CD8-positive, alpha-beta memory T cell (primary cell): ENCODE measurements at regions of chr11 and their contacts with region 1.

Region 1: DNA sequence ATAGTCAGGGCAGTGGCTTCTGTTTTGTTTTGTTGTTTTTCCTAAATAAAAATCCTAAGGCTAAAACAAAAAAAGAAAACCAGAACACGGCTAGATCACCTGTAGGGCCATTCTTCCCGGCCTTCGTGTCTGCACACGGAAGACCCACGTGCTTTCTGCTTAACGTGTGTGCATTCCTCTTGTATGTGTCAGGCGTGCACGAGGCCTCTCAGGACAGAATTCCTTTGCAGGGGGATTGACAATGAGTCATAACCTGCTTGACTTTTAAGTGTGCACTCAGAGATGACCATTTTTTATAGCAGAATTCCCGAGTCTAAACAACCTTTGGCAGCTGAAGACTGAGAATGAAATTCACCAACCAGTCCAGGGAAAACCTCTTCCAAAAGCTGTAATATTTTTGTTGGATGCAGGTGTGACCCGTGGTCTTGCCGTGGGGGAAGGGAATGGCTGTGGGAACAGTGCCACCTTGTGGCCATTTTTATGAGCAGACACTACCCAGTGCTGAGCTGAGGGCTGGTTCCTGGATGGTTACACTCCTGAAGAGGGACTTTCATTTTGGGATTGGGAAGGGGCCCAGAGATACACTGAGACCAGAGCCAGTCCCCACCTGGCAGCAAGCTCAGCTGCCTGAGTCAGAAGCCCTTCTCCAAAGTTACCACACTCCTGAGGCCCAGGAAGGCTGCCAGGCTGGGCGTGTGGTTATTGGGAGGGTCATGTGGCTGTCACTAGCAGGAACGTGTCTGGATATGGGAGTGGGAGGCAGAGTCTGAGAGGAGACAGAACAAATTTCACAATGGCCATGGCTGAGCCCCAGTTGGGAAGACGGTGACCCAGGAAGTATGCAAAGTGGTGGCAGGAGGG is 35.8 kb upstream of the DKK3 start:
- DNase-seq: peak; percentile 43 to 74 (median 51)
- H3K4me3 ChIP-seq: no peak overlapping the region
- H3K4me3 Mint-ChIP-seq: no peak overlapping the region
- H3K27ac ChIP-seq: no peak overlapping the region
- H3K27ac Mint-ChIP-seq: no peak overlapping the region
- H3K4me1 ChIP-seq: peaks cover 4% of the 10 kb centered on the region
- H3K4me1 Mint-ChIP-seq: peaks cover 3 to 5% (median 4%) of the 10 kb centered on the region in 3 donors
- H3K27me3 ChIP-seq: no peaks in the 10 kb centered on the region
- H3K27me3 Mint-ChIP-seq: peaks cover 0 to 10% of the 10 kb centered on the region in 2 donors

Region 2: GRCh38 chr11:11391796-11392195 is 652.4 kb before region 1 on chr11:
- CTCF ChIA-PET with region 1: no interaction called
- POLR2A ChIA-PET with region 1: no interaction called
- DNase-seq: no peak
- H3K4me3 ChIP-seq: no peak overlapping the region
- H3K4me3 Mint-ChIP-seq: no peak overlapping the region
- H3K27ac ChIP-seq: no peak overlapping the region
- H3K27ac Mint-ChIP-seq: no peak overlapping the region
- H3K4me1 ChIP-seq: no peaks in the 10 kb centered on the region
- H3K4me1 Mint-ChIP-seq: no peaks in the 10 kb centered on the region
- H3K27me3 ChIP-seq: no peaks in the 10 kb centered on the region
- H3K27me3 Mint-ChIP-seq: peaks cover 4 to 30% of the 10 kb centered on the region in 2 donors

Region 3: DNA sequence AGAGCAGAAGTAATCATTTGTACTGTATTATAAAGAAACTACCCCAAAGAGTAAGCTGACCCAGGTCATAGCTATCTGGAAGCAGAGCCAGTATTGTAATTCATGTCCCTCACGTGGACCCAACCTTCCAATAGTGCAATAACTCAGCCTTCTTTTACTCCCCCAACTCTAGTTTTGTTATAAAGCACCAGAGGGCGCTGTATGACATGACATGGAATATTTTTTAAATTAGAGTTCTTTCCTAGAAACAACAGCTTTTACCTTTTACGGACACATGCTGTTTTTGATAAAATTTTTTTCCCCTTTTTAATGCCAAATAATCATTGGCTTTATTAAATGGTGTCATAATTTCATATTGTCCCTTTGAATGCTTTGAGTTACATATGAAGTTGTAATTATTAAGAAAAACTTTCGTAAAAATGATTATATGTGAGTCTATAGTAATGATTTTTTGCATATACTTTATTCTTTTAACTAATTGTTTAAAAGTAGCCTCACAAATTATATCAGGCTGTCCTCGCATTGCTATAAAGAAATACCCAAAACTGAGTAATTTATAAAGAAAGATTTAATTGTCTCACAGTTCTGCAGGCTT is 112.6 kb before region 1 on chr11:
- CTCF ChIA-PET with region 1: interaction called, 21 read pairs
- POLR2A ChIA-PET with region 1: no interaction called
- DNase-seq: peak in 2 of 5 donors; percentile 11 to 22
- H3K4me3 ChIP-seq: no peak overlapping the region
- H3K4me3 Mint-ChIP-seq: no peak overlapping the region
- H3K27ac ChIP-seq: no peak overlapping the region
- H3K27ac Mint-ChIP-seq: peak overlapping the region in 1 of 8 donors; percentile 68
- H3K4me1 ChIP-seq: no peaks in the 10 kb centered on the region
- H3K4me1 Mint-ChIP-seq: peaks cover 1 to 13% (median 5%) of the 10 kb centered on the region in 3 donors
- H3K27me3 ChIP-seq: no peaks in the 10 kb centered on the region
- H3K27me3 Mint-ChIP-seq: no peaks in the 10 kb centered on the region

Region 4: DNA sequence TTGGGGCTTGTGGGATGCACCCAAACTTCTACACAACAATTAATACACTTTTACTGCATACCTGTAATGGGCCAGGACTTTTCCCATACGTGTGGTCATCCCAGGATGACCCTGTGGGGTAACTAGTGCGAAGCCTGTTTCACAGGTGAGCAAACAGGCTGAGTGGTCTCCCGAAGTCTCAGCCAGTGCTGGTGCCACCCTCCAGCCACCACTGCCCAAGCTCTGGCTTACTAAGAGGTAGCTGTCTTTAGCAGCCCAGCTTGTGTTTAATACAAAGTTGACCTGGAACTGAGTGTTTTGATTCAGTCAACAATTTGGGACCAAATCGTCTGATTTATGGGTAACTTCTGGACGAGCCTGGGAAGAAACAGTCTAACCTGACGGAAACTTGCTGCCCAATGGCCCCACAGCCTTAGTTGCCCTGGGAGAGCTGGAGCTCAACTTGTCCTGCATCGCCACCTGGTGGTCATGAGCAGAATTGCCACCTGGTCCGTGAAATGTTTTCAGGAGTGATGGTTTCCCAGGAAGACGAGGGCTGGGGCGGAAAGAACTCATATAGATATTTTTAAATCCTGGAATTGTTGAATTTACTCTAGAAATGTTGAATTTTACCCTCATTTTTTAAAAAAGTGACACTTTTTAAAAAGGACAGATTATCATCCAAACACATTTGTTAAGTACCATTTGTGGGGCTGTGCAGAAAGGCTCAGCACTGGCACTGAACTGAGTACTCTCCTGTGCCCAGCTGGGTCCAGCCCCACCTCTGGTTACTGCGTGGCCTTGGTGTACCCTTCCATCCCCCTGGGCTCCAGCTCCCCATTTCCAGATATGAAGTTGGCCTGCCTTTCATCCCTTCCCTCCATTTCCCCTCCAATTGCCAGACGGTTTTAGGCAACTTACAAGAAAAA is 237.6 kb after region 1 on chr11:
- CTCF ChIA-PET with region 1: interaction called, 302 read pairs
- POLR2A ChIA-PET with region 1: no interaction called
- DNase-seq: peak; percentile 62 to 84 (median 68)
- H3K4me3 ChIP-seq: no peak overlapping the region
- H3K4me3 Mint-ChIP-seq: no peak overlapping the region
- H3K27ac ChIP-seq: no peak overlapping the region
- H3K27ac Mint-ChIP-seq: peak overlapping the region in 1 of 8 donors; percentile 47
- H3K4me1 ChIP-seq: peaks cover 5% of the 10 kb centered on the region
- H3K4me1 Mint-ChIP-seq: no peaks in the 10 kb centered on the region
- H3K27me3 ChIP-seq: no peaks in the 10 kb centered on the region
- H3K27me3 Mint-ChIP-seq: no peaks in the 10 kb centered on the region